ENCODE measurements at regions of chr3 and their contacts with region 1.

Region 1: GRCh38 chr3:172039436-172040077 is at the start of gene FNDC3B:
- DNase-seq: peak; percentile 95 to 97 (median 95)
- ATAC-seq: peak; percentile 84 to 93 (median 90)
- H3K4me3 ChIP-seq: peak within 1 kb of the TSS; percentile 65 to 100 (median 92)
- H3K27ac ChIP-seq: peak within 1 kb of the TSS; percentile 97 to 100 (median 99)
- H3K4me1 ChIP-seq: peaks cover 0 to 45% (median 34%) of the 10 kb centered on the region in 12 donors
- H3K27me3 ChIP-seq: no peaks in the 10 kb centered on the region
- CTCF ChIP-seq: no peak
- POLR2A ChIP-seq: peak; percentile 67 to 96
- total RNA-seq, gene FNDC3B: 59.1 to 113 (median 79.0) TPM

Region 2: DNA sequence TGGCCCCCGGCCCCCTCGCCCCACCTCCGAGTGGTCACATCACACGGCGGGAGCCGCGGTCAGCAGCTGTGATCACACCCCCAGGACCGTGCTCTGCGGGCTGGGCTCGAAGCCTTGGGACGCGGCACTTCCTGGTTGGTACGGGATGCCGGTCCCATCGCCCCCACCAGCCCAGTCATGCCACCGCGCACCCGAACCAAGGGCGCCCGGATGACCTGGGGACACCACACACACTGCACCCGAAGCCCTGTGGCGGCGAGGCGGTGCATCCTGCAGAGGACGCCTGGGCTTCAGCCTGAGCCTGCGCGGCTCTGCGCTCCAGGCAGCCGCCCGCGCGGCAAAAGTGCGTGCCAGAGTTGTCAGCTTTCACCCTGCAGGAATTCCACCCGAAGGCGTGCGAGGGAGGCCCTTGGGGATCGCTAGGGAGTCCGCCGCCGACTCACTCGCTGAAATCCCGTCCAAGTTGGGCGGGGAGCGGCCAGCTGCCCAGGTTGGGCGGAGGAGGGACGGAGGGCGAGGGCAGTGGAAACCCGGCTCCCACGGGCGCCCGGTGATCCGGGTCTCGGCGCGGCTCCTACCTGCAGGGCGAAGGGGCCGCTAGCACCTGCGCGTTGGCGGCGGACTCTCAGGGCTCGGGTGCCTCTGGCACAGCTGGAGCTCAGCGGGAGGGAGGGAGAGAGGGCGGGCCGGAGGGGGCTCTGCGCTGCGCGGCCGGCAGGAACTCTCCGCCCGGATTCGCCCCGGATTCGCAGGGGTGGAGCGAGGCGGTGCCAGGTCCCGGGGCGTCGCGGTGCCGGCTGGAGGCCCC is 229.5 kb before region 1 on chr3 and contains the start of gene PLD1:
- intact Hi-C with region 1: loop called in 1 of 10 experiments (anchors 2 kb)
- DNase-seq: peak; percentile 87 to 94 (median 92)
- ATAC-seq: peak; percentile 59 to 92 (median 85)
- H3K4me3 ChIP-seq: peak within 1 kb of the TSS; percentile 42 to 91 (median 72)
- H3K27ac ChIP-seq: peak within 1 kb of the TSS; percentile 53 to 95 (median 92)
- H3K4me1 ChIP-seq: peaks cover 3 to 70% (median 25%) of the 10 kb centered on the region in 12 donors
- H3K27me3 ChIP-seq: no peaks in the 10 kb centered on the region
- CTCF ChIP-seq: peak in 3 of 12 donors; percentile 26 to 39 (median 36)
- POLR2A ChIP-seq: no peak
- total RNA-seq, gene PLD1: 44.5 to 106 (median 61.4) TPM

Region 3: DNA sequence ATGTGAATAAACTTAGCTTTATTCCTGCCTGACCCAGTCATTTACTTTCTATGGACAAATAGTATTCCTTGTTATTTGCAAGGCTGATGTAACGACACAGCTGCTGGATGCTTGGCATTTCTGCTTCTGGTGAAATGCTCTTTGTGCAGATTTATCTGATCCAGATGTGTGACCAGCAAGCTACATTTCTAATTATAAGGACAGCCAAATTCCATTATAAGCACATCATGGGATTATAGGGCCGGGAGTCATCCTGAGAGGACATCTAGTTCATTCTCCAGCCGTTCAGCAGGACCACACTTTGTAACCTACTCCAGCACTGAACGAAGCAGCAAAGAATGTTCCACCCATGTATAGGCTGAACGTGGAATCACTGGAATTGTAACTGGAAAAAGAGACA is 42.7 kb after region 1 on chr3:
- intact Hi-C with region 1: loop called in 1 of 10 experiments (anchors 5 kb)
- DNase-seq: peak in 4 of 5 donors; percentile 38 to 55 (median 47)
- ATAC-seq: peak; percentile 91 to 93 (median 92)
- H3K4me3 ChIP-seq: no peak overlapping the region
- H3K27ac ChIP-seq: peak overlapping the region; percentile 14 to 88 (median 72)
- H3K4me1 ChIP-seq: peaks cover 8 to 67% (median 44%) of the 10 kb centered on the region in 12 donors
- H3K27me3 ChIP-seq: no peaks in the 10 kb centered on the region
- CTCF ChIP-seq: no peak
- POLR2A ChIP-seq: no peak

Region 4: DNA sequence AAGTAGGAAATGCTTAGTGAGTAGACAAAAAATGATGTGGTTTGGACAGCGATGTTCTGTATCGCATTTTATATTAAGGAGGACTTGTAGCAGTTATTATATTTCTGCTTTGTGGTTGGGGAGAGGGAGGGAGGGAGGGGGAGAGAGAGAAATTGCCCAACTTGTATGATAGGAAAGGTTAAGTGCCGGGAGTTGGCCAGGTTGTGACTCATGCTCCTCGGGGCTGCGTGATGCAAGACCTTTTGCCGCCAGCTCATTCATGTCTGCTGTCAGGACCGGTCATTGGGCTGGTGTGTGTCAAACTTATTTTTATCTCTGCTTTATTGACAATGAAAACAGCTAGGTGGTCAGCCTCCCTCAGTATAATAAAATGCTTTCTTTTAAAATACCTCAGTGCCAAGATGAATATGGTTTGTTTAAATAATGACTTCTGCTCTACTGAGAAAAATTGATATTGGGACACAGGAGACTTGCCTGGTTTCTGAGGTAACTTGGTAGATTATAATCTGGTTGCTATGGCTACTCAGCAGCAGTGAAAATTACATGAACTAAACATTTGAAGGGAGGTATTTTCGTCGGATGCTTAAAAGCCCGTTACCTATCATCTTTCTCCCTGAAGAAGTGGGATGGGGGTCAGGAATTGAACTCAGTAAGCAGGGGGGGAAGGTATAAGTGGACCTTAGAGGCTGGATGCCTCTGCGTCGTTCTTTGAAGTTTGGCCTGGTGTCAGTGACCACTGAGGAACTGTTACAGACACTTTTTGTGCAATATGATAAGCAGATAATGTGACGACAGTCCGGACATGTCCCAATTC is 90.5 kb after region 1 on chr3:
- intact Hi-C with region 1: loop called in 4 of 10 experiments (anchors 5 to 10 kb)
- DNase-seq: peak; percentile 86 to 96 (median 88)
- ATAC-seq: peak; percentile 73 to 96 (median 92)
- H3K4me3 ChIP-seq: peak overlapping the region in 1 of 12 donors; percentile 10
- H3K27ac ChIP-seq: peak overlapping the region in 11 of 12 donors; percentile 43 to 92 (median 74)
- H3K4me1 ChIP-seq: peaks cover 13 to 100% (median 61%) of the 10 kb centered on the region in 12 donors
- H3K27me3 ChIP-seq: no peaks in the 10 kb centered on the region
- CTCF ChIP-seq: no peak
- POLR2A ChIP-seq: no peak

Region 5: GRCh38 chr3:172201136-172201869 is 161.7 kb after region 1 on chr3:
- intact Hi-C with region 1: loop called in 2 of 10 experiments (anchors 2 to 5 kb)
- DNase-seq: peak; percentile 89 to 92 (median 91)
- ATAC-seq: peak; percentile 87 to 93 (median 88)
- H3K4me3 ChIP-seq: peak overlapping the region in 2 of 12 donors; percentile 0 to 13
- H3K27ac ChIP-seq: peak overlapping the region; percentile 60 to 91 (median 78)
- H3K4me1 ChIP-seq: peaks cover 10 to 66% (median 51%) of the 10 kb centered on the region in 12 donors
- H3K27me3 ChIP-seq: no peaks in the 10 kb centered on the region
- CTCF ChIP-seq: no peak
- POLR2A ChIP-seq: no peak

Region 6: GRCh38 chr3:172332256-172333041 is 292.9 kb after region 1 on chr3:
- intact Hi-C with region 1: loop called in 5 of 10 experiments (anchors 5 to 10 kb)
- DNase-seq: peak in 4 of 5 donors; percentile 50 to 63 (median 54)
- ATAC-seq: peak; percentile 76 to 89 (median 86)
- H3K4me3 ChIP-seq: no peak overlapping the region
- H3K27ac ChIP-seq: peak overlapping the region in 8 of 12 donors; percentile 3 to 63 (median 34)
- H3K4me1 ChIP-seq: peaks cover 0 to 11% (median 5%) of the 10 kb centered on the region in 12 donors
- H3K27me3 ChIP-seq: no peaks in the 10 kb centered on the region
- CTCF ChIP-seq: peak; percentile 82 to 95 (median 90)
- POLR2A ChIP-seq: no peak

Region 7: GRCh38 chr3:172666873-172667694 is 627.5 kb after region 1 on chr3:
- intact Hi-C with region 1: loop called in 1 of 10 experiments (anchors 10 kb)
- DNase-seq: peak in 4 of 5 donors; percentile 65 to 79 (median 73)
- ATAC-seq: peak; percentile 88 to 97 (median 96)
- H3K4me3 ChIP-seq: no peak overlapping the region
- H3K27ac ChIP-seq: no peak overlapping the region
- H3K4me1 ChIP-seq: peaks cover 0 to 28% (median 20%) of the 10 kb centered on the region in 12 donors
- H3K27me3 ChIP-seq: no peaks in the 10 kb centered on the region
- CTCF ChIP-seq: peak; percentile 73 to 89 (median 84)
- POLR2A ChIP-seq: no peak

Measured in heart left ventricle (tissue), 16 donors.